Activated CD4-positive, alpha-beta T cell treated with anti-CD3 and anti-CD28 coated beads, Interleukin-2, amount 10 ng/mL, durations not matched to agents 24 days and 14 days (primary cell): ENCODE measurements at regions of chr19 and their contacts with region 1.

Region 1: DNA sequence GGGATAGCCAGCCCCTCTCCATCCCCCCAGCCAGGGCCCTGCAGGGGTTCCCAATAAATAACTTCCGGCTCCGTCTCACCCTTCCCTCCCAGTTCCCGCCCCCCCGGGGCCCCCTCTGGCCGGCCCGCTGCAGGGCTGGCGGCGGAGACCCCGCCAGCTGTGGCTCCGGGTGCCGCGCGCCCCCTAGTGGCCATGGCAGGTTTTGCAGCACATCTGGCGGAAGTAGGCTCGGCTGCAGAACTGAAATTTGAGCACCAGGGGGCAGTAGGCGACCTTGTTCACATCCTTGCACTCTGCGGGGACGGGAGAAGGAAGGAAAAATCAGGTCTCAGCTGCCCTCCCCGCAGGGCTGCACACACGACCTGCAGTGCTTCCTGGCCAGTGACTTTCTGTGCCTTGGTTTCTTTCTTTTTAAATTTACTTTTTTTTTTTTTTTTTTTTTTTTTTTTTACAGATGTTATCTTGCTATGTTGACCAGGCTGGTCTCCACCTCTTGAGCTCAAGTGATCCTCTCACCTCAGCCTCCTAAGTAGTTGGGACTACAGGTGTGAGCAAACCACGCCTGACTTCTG is 3.6 kb upstream of the MYO1F start:
- DNase-seq: peak; percentile 96
- H3K4me3 Mint-ChIP-seq: no peak overlapping the region
- H3K27ac Mint-ChIP-seq: no peak overlapping the region
- H3K4me1 Mint-ChIP-seq: peaks cover 26% of the 10 kb centered on the region
- H3K27me3 Mint-ChIP-seq: peaks cover 4% of the 10 kb centered on the region

Region 2: DNA sequence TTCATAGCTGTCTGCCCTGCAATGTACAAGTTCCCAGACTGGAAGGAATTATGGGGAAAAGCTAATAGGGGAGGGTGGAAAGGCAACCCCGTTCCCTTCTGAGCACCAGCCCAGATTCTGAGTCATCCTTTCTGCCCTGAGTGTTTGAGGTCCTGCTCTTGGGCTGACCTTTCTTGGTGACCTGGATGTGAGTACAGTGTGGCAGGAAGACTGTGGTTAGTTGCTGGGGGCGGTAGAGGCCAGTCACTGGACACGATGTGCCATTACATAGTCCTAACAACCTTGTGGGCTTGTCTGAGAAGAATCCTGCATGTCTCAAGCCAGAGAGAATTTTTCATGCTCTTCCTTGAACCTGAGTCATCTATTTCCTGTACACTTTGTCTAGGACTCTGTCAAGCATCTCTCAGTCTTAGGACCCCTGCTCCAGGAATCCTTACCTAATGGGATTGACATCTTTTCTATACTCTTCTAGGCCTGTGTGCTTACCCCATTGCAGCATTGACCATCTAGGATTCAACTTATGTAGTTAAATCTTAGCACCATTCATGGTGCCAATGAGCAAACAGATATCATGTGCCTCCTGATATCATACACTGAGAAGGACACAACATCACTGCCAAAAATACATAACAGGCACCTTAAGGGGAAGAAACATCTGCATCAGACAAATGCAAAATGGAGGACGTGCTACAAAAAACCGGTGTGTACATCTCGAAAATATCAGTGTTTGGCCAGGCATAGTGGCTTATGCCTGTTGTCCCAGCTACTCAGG is 225.0 kb before region 1 on chr19:
- intact Hi-C with region 1: loop called (anchors 5 kb)
- DNase-seq: no peak
- H3K4me3 Mint-ChIP-seq: no peak overlapping the region
- H3K27ac Mint-ChIP-seq: no peak overlapping the region
- H3K4me1 Mint-ChIP-seq: peaks cover 13% of the 10 kb centered on the region
- H3K27me3 Mint-ChIP-seq: peaks cover 15% of the 10 kb centered on the region

Region 3: GRCh38 chr19:8444645-8445487 is 135.9 kb before region 1 on chr19 and contains the start of gene HNRNPM:
- intact Hi-C with region 1: loop called (anchors 10 kb)
- DNase-seq: peak; percentile 100
- H3K4me3 Mint-ChIP-seq: peak within 1 kb of the TSS; percentile 96
- H3K27ac Mint-ChIP-seq: peak within 1 kb of the TSS; percentile 99
- H3K4me1 Mint-ChIP-seq: peaks cover 25% of the 10 kb centered on the region
- H3K27me3 Mint-ChIP-seq: no peaks in the 10 kb centered on the region
- total RNA-seq, gene HNRNPM: 349 and 352 TPM in 2 replicates

Region 4: DNA sequence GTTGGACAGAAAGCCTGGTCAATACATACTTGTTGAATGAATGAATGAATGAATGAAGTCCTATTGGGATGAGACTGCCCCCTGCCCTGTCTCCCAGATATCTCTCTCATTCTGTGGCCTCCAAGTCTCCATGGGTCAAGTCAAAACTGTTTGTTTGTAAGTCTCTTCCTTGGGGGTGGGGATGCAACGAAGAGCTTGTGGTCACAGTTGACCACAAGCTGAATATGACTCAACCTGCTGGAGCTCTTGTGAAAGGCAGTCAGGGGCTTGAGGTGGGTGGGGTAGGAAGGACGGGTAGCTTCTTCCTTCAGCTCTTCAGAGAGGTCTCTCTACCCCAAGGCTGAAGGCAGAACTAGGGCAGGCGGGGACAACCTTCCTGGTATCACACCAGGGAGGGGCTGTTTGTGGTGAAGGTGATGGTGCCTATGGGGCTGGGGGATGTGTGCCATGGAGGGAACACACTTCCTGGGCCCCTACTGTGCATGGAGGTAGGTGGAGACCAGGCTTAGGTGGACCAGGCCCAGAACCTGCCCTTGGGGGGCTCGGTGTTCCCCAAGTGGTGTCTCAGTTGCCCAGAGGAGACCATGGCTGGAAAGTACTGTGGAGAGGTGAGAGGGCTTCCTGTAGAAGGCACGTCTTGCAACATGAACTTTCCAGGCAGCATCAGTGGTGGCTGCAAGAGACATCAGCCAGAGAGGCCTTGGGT is 11.6 kb before region 1 on chr19:
- intact Hi-C with region 1: loop called (anchors 1 kb)
- DNase-seq: peak; percentile 93
- H3K4me3 Mint-ChIP-seq: peak overlapping the region; percentile 83
- H3K27ac Mint-ChIP-seq: peak overlapping the region; percentile 94
- H3K4me1 Mint-ChIP-seq: peaks cover 63% of the 10 kb centered on the region
- H3K27me3 Mint-ChIP-seq: peaks cover 2% of the 10 kb centered on the region

Region 5: DNA sequence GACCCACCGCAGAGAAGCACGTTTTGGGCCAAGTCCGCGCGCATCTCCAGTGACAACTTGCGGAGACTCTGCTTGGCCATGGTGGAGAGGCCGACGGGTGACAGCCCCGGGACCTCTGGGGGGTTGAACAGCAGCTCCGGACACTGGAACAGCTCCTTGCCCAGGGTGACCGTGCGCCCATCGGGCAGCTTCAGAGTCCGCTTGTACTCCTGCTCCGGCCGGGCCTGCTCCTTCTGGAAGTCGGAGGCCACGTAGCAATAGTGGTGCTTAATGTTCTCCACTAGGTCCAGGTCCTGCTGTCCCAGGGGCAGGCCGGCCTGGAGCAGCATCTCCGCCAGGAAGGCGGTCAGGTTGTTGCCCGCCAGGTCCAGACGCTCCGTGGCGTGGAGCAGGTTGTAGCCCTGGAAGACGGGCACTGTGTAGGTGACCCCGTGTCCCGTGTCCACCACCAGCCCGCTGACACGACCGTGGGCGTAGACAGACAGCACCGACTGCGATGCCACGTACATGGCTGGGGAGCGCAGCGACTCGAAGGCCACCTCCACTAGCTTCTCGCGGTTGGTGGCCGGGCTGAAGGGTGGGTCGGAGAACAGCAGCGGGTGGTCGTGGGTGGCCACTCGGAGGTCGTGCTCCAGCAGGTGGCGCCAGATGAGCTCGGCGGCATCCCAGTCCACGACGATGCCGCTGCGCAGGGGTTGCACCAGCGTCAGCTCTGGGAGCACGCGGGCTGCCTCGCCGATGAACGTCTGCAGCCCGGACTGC is 117.1 kb after region 1 on chr19:
- intact Hi-C with region 1: loop called (anchors 10 kb)
- DNase-seq: peak; percentile 62
- H3K4me3 Mint-ChIP-seq: no peak overlapping the region
- H3K27ac Mint-ChIP-seq: no peak overlapping the region
- H3K4me1 Mint-ChIP-seq: peaks cover 49% of the 10 kb centered on the region
- H3K27me3 Mint-ChIP-seq: peaks cover 14% of the 10 kb centered on the region